H1 (cell line): ENCODE measurements at regions of chr16 and their contacts with region 1.

Region 1: DNA sequence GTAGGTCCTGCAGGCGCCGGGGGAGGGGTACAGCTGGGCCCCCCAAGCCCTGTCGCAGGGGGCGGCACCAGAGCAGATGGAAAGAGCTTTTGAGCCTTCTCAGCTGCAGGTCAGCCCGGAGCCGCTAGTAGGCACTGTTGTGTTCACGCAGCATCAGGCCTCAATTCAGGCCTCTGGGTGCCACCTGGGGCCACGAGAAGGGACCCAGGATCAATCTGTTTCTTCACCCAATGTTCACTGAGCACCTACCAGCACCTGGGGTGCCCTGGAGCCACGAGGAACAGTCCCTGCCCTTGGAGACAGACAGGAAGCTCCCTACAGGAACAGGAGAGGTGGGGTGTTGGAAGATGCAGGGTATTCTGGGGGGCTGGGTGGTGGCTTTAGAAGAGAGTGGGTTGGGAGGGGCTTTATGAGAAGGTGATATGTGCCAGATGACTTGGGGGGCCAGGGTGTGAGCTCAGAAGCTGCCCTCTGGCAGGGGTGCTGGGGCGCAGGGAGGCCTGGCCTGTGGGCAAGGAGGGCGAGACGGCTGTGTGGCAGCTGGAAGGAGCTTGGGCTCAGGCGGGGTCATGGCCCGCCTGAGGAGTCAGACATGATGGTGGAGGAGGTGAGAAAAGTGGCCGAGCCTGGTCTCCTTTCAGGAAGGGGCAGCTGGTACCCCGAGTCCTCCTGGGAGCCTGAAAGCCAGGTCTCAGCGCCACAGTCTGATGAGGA is 121.9 kb upstream of the GSE1 start:
- DNase-seq: peak in 1 of 2 experiments; percentile 89
- H3K4me3 ChIP-seq: no peak overlapping the region
- H3K27ac ChIP-seq: no peak overlapping the region
- H3K4me1 ChIP-seq: peaks cover 3 to 19% (median 14%) of the 10 kb centered on the region in 4 experiments; a peak in 6 of 7 replicates
- H3K27me3 ChIP-seq: no peaks in the 10 kb centered on the region
- CTCF ChIP-seq: peak; percentile 89 to 96 (median 95)
- EP300 ChIP-seq: no peak
- POLR2A ChIP-seq: no peak
- RAD21 ChIP-seq: peak; percentile 66 to 76

Region 2: DNA sequence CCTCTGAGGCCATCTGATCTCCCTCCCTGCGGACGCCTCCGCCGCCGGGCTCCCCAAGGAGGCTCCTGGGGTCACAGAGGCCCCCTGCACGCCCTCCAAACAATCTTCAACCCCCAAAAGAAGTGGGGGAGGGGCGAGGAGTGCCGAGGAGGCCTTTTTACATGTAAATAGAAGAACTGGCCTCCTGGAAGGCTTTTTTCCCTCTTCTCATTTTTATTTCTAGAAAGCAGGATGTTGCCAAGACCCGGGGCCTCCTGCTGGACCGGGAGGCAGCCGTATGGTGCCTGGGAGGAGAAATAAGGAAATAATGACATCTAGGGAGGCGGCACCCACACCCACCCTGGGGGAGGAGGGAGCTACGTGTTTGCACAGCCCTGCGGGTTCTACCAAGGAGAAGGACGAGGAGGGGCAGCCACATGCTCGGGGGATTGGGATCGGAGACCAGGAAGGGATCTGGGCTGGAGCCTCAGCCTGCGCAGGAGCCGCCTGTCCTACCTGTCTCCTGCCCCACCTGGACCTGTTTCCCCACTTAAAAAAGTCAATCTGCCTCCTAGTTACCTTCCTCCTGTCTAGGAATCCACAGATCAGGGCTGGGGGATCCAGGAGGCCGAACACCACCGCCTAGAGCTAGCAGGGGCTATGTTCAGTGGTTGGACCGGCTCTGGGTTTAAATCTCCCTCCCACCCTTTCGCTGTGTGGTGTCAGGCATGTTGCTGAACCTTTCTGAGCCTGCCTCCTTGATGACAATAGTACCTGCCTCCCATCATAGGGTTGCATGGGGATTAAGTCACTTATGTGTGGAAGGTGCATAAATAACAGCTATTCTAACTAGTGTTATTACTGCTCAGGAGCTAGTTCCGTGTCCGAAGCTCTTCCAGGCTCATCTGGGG is 53.8 kb before region 1 on chr16:
- CTCF ChIA-PET with region 1: interaction called, 22 read pairs
- POLR2A ChIA-PET with region 1: interaction called, 5 read pairs
- DNase-seq: no peak
- H3K4me3 ChIP-seq: peak overlapping the region in 1 of 4 experiments; percentile 50; a peak in 2 of 8 replicates
- H3K27ac ChIP-seq: peak overlapping the region; percentile 21; the same call in 1 of the 2 replicates
- H3K4me1 ChIP-seq: peaks cover 14 to 47% (median 35%) of the 10 kb centered on the region in 4 experiments
- H3K27me3 ChIP-seq: peaks cover 0 to 7% (median 0%) of the 10 kb centered on the region in 4 experiments; a peak in 3 of 7 replicates
- CTCF ChIP-seq: no peak
- EP300 ChIP-seq: no peak
- POLR2A ChIP-seq: no peak; a peak in 1 of 3 replicates
- RAD21 ChIP-seq: no peak

Region 3: DNA sequence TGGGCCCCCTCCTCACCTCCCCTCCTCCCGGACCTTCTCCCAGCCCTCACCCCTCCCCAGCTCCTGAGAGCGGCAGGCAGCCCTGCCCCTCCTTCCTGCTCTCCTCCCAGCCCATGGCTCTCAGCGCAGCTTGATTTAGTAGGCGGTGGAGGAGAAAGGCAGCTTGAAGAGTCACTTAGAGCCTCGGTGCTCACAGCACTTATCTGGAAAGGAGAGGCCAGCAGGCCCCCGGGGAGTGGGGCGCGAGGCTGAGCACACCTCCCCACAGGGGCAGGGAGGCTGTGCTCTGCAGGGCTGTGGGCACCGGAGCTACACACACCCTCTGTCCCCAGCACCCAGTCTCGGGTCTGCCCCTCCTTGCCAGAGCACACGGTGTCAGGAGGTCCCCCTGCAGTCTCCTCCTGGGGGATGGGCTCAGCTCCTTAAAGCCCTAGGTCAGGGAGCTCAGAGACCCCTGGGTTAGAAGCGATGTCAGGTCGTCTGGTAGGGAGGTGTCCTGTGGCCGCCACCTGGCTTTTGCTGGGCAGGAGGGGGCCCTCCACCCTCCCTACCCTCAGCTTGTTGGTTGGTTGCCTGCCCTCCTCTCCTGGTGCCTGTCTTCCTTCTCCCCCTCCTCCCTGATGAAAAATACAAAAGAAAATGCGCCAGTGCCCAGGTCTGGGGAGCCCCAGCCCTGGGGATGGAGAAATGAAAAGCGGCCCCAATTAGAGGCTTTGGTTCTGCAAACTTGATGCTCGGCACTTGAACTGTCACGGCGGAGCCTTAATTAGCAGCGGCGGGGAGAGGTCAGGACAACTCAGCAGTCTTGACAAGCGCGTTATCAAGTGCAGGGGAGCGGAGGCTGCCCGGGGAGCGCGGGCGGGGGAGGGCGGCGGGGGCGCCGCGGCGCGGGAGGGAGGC is 29.2 kb before region 1 on chr16:
- CTCF ChIA-PET with region 1: interaction called, 277 read pairs
- POLR2A ChIA-PET with region 1: interaction called, 3 read pairs
- DNase-seq: peak in 1 of 2 experiments; percentile 76
- H3K4me3 ChIP-seq: peak overlapping the region; percentile 4 to 57 (median 46)
- H3K27ac ChIP-seq: no peak overlapping the region
- H3K4me1 ChIP-seq: peaks cover 7 to 33% (median 25%) of the 10 kb centered on the region in 4 experiments
- H3K27me3 ChIP-seq: peaks cover 5 to 49% (median 36%) of the 10 kb centered on the region in 4 experiments; a peak in 6 of 7 replicates
- CTCF ChIP-seq: no peak
- EP300 ChIP-seq: no peak
- POLR2A ChIP-seq: no peak
- RAD21 ChIP-seq: no peak

Region 4: DNA sequence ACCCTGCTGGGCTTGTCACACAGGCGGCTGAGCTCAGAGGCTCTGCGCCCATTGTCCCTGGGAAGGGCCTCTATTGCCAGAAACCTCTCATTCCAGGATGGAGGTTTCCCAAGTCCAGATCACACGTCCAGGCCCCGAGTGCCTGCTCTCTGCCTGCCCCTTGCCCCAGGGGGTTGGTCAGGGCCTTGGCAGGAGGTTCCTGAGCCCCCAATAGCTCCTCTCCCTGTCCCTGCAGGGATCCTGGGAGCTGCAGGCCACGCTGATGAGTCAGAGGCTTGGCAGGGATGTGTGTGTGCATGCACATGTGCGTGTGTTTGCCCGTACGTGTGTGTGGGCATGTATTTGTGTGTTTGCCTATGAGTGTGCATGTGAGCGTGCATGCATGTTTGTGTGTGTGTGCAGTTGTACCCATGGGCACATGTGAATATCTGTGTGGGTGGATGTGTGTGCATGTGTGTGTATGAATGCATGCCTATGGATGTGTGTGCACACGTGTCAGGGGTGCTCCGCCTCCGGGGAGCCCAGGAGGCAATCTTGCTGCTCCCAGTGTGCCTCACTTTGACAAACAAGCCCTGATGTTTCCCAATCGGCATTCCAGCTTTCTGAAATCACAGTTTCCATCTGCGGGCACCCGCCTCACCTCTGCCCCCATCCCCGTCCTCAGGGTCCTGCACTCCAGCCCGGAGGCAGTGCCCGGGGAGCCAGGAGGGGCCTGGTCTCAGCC is 23.5 kb after region 1 on chr16:
- CTCF ChIA-PET with region 1: interaction called, 56 read pairs
- POLR2A ChIA-PET with region 1: interaction called, 3 read pairs
- DNase-seq: no peak
- H3K4me3 ChIP-seq: no peak overlapping the region
- H3K27ac ChIP-seq: no peak overlapping the region
- H3K4me1 ChIP-seq: peaks cover 0 to 20% (median 14%) of the 10 kb centered on the region in 4 experiments; a peak in 6 of 7 replicates
- H3K27me3 ChIP-seq: no peaks in the 10 kb centered on the region; a peak in 1 of 7 replicates
- CTCF ChIP-seq: no peak
- EP300 ChIP-seq: no peak
- POLR2A ChIP-seq: no peak
- RAD21 ChIP-seq: no peak

Region 5: GRCh38 chr16:85541980-85542900 is 51.0 kb after region 1 on chr16:
- CTCF ChIA-PET with region 1: interaction called, 15 read pairs
- POLR2A ChIA-PET with region 1: no interaction called
- DNase-seq: no peak
- H3K4me3 ChIP-seq: no peak overlapping the region
- H3K27ac ChIP-seq: no peak overlapping the region
- H3K4me1 ChIP-seq: peaks cover 0 to 14% (median 9%) of the 10 kb centered on the region in 4 experiments; a peak in 6 of 7 replicates
- H3K27me3 ChIP-seq: no peaks in the 10 kb centered on the region
- CTCF ChIP-seq: no peak
- EP300 ChIP-seq: no peak
- POLR2A ChIP-seq: no peak
- RAD21 ChIP-seq: no peak

Region 6: DNA sequence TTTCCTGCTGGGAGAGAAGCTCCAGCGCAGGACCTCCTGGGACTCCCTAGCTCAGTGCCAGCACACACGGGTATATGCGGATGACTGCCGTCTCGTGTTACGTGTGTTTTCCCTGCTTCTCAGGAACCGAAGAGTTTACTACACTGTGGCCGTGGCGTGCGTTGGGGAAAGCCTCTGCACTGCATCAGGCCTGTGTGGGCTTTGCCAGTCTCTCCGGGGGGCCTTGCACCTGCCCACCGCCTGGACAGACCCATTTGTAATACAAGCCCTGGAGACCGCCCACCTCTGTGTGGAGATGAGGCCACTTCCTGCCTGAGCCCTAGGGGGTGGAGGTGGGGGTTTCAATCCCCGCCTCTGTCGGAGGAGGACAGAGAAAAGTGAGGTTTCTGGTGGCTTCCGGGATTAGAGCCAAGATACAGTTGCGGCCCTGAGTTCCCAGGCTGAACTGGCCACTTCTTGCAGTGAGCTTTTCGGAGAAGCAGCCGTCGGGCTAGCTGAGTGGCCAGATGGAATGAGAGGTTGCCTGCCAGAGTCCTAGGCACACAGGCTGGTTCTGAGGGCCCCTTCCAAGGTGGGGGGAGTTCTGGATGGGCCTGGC is 78.5 kb after region 1 on chr16:
- CTCF ChIA-PET with region 1: interaction called, 19 read pairs
- POLR2A ChIA-PET with region 1: no interaction called
- DNase-seq: no peak
- H3K4me3 ChIP-seq: no peak overlapping the region
- H3K27ac ChIP-seq: no peak overlapping the region; the same call in 1 of the 2 replicates
- H3K4me1 ChIP-seq: peaks cover 24 to 65% (median 41%) of the 10 kb centered on the region in 4 experiments
- H3K27me3 ChIP-seq: peaks cover 0 to 3% (median 0%) of the 10 kb centered on the region in 4 experiments; a peak in 2 of 7 replicates
- CTCF ChIP-seq: no peak
- EP300 ChIP-seq: 0 out of 3 replicates have a peak, but pooled peaks of 1 of the 2 experiments have one; percentile 22
- POLR2A ChIP-seq: no peak
- RAD21 ChIP-seq: no peak; a peak in 1 of 4 replicates